Thyroid gland (tissue), 4 donors: ENCODE measurements at regions of chr14 and their contacts with region 1.

Region 1: DNA sequence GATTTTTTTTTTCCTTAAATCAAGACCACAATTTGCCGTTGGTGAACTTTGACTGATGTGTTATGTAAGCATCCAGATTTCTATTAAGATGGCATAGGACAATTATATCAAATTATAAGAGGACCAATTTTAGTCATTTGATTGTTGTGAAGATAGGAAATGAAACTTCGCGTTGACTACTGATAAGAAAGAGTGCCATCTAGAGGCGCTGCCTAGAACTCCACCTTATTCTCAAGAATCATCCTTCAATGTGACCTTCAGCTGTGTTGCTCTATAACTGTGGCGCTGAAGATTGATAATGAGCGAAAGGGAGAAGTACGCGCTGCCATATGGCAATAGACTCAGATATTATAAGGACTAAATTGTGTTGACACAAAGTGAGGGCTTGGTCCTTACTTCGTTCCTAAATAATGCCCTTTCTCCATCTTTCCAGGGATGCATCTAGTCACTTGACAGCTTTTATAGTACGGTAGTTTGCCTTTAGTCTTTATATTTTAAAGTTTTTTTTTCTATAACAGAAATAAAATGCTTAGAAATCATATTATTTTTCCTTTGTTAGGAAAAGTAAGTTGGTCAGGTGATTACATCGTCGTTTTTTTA is 350.8 kb upstream of the STXBP6 start:
- DNase-seq: peak; percentile 65 to 66
- H3K4me3 ChIP-seq: no peak overlapping the region
- H3K27ac ChIP-seq: no peak overlapping the region
- H3K4me1 ChIP-seq: no peaks in the 10 kb centered on the region
- H3K27me3 ChIP-seq: no peaks in the 10 kb centered on the region
- CTCF ChIP-seq: peak; percentile 41 to 81 (median 73)
- POLR2A ChIP-seq: no peak

Region 2: DNA sequence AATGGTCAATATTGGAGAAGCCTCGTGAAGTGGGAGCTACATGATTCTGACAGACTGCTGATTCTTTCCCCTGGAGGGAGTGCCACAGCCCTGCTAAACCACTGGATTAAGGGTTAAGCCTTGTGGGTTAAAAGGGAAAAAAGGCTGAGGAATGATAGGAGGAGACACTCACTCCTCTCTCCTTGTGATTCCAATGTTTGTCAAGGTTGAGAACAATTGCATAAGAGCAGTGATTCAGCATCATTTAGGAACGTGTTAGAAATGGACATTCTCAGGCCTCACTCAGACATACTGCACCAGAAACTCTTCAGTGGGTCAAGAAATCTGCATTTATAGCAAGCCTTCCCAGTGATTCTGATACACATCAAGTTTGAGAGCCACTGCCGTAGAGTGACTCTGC is 678.9 kb before region 1 on chr14:
- intact Hi-C with region 1: loop called (anchors 10 kb)
- DNase-seq: no peak
- H3K4me3 ChIP-seq: no peak overlapping the region
- H3K27ac ChIP-seq: no peak overlapping the region
- H3K4me1 ChIP-seq: no peaks in the 10 kb centered on the region
- H3K27me3 ChIP-seq: no peaks in the 10 kb centered on the region
- CTCF ChIP-seq: no peak
- POLR2A ChIP-seq: no peak

Region 3: DNA sequence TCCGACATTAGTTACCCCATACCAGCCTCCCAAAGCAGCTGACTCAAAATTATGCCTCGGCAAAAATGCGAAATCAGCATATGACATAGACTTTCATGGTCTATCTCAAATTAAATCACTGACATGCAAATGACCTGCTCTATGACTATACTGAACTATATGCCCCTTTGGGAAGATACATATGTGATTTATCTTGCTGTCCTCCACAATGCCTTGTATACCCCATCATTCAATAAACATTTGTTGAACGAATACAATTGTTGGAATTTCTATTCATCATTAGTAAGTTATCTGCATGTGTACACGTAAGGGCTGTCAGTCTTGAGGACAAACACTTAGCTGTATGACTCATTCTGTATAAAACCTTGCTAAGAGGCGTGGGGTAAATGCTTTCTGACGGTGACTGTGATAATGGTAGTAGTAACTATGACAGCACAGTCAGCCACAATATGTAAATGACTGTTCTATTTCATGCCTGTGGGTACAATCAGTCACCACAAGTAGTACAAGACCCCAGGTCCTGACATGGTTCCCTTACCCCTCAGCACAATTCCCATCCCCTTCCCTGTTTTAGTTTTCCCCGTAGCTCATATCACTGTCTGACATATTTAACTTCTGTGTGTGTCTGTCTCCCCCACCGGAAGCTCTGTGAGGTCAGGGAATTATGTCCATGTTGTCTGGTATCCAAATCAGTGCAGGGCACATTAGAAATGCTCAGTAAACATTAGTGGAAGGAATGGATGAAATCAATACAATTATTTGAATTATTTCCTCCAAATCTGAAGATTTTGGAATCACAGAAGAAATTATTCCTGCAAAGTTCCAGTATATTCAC is 393.5 kb before region 1 on chr14:
- intact Hi-C with region 1: no loop called
- DNase-seq: no peak
- H3K4me3 ChIP-seq: no peak overlapping the region
- H3K27ac ChIP-seq: peak overlapping the region; percentile 4 to 54 (median 34)
- H3K4me1 ChIP-seq: peaks cover 60 to 64% of the 10 kb centered on the region in 2 donors
- H3K27me3 ChIP-seq: no peaks in the 10 kb centered on the region
- CTCF ChIP-seq: no peak
- POLR2A ChIP-seq: no peak